Naive thymus-derived CD4-positive, alpha-beta T cell (primary cell): ENCODE measurements at regions of chr16 and their contacts with region 1.

Region 1: GRCh38 chr16:71808593-71809459 is at the start of gene AP1G1:
- DNase-seq: peak; percentile 78 to 98 (median 94)
- ATAC-seq: peak; percentile 95
- H3K4me3 ChIP-seq: peak within 1 kb of the TSS; percentile 99
- H3K4me3 Mint-ChIP-seq: peak within 1 kb of the TSS; percentile 86 to 99 (median 97)
- H3K27ac ChIP-seq: peak within 1 kb of the TSS; percentile 99
- H3K27ac Mint-ChIP-seq: peak within 1 kb of the TSS; percentile 98 to 100 (median 100)
- H3K4me1 ChIP-seq: peaks cover 22 to 24% of the 10 kb centered on the region in 2 donors
- H3K4me1 Mint-ChIP-seq: peaks cover 7 to 68% (median 37%) of the 10 kb centered on the region in 7 donors
- H3K27me3 ChIP-seq: no peaks in the 10 kb centered on the region
- H3K27me3 Mint-ChIP-seq: peaks cover 0 to 2% (median 0%) of the 10 kb centered on the region in 5 donors
- total RNA-seq, gene AP1G1: 95.3 to 147 (median 100.0) TPM

Region 2: GRCh38 chr16:71461686-71462648 is 346.9 kb before region 1 on chr16 and contains the start of gene ZNF23:
- CTCF ChIA-PET with region 1: no interaction called
- POLR2A ChIA-PET with region 1: no interaction called
- intact Hi-C with region 1: loop called in 1 of 2 experiments (anchors 10 kb)
- DNase-seq: peak; percentile 53 to 84 (median 72)
- ATAC-seq: peak; percentile 99
- H3K4me3 ChIP-seq: peak within 1 kb of the TSS; percentile 92
- H3K4me3 Mint-ChIP-seq: peak within 1 kb of the TSS; percentile 88 to 97 (median 94)
- H3K27ac ChIP-seq: peak within 1 kb of the TSS; percentile 87
- H3K27ac Mint-ChIP-seq: peak within 1 kb of the TSS; percentile 85 to 98 (median 92)
- H3K4me1 ChIP-seq: peaks cover 4 to 6% of the 10 kb centered on the region in 2 donors
- H3K4me1 Mint-ChIP-seq: peaks cover 13 to 39% (median 27%) of the 10 kb centered on the region in 7 donors
- H3K27me3 ChIP-seq: no peaks in the 10 kb centered on the region
- H3K27me3 Mint-ChIP-seq: no peaks in the 10 kb centered on the region
- total RNA-seq, gene ZNF23: 6.5 to 16.0 (median 8.8) TPM

Region 3: GRCh38 chr16:71474864-71475263 is 334.0 kb before region 1 on chr16:
- CTCF ChIA-PET with region 1: no interaction called
- POLR2A ChIA-PET with region 1: no interaction called
- intact Hi-C with region 1: no loop called
- DNase-seq: no peak
- ATAC-seq: no peak
- H3K4me3 ChIP-seq: no peak overlapping the region
- H3K4me3 Mint-ChIP-seq: no peak overlapping the region
- H3K27ac ChIP-seq: no peak overlapping the region
- H3K27ac Mint-ChIP-seq: no peak overlapping the region
- H3K4me1 ChIP-seq: no peaks in the 10 kb centered on the region
- H3K4me1 Mint-ChIP-seq: peaks cover 0 to 5% (median 0%) of the 10 kb centered on the region in 7 donors
- H3K27me3 ChIP-seq: no peaks in the 10 kb centered on the region
- H3K27me3 Mint-ChIP-seq: no peaks in the 10 kb centered on the region

Region 4: GRCh38 chr16:71723537-71724319 is 85.1 kb before region 1 on chr16:
- CTCF ChIA-PET with region 1: no interaction called
- POLR2A ChIA-PET with region 1: interaction called, 5 read pairs
- intact Hi-C with region 1: loop called (anchors 1 kb)
- DNase-seq: peak; percentile 81 to 93 (median 88)
- ATAC-seq: peak; percentile 93
- H3K4me3 ChIP-seq: peak overlapping the region; percentile 79
- H3K4me3 Mint-ChIP-seq: peak overlapping the region; percentile 80 to 97 (median 86)
- H3K27ac ChIP-seq: peak overlapping the region; percentile 79
- H3K27ac Mint-ChIP-seq: peak overlapping the region in 8 of 9 donors; percentile 30 to 92 (median 78)
- H3K4me1 ChIP-seq: peaks cover 9% of the 10 kb centered on the region in 2 donors
- H3K4me1 Mint-ChIP-seq: peaks cover 7 to 20% (median 19%) of the 10 kb centered on the region in 7 donors
- H3K27me3 ChIP-seq: no peaks in the 10 kb centered on the region
- H3K27me3 Mint-ChIP-seq: peaks cover 0 to 17% (median 0%) of the 10 kb centered on the region in 5 donors

Region 5: DNA sequence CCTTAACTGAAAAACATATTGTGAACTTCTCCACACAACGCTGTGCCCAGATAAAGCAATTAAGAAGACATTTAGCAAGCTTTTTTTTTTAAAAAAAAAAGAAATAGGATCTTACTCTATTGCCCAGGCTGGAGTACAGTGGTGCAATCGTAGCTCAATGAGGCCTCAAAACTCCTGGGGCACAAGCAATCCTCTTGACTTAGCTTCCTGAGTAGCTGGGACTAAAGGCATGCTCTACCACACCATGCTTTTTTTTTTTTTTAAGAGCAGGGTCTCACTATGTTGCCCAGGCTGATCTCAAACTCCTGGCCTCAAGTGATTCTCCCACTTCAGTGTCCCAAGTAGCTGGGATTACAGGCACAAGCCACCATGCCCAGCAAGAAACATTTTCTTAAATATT is 20.2 kb before region 1 on chr16:
- CTCF ChIA-PET with region 1: no interaction called
- POLR2A ChIA-PET with region 1: interaction called, 10 read pairs
- intact Hi-C with region 1: no loop called
- DNase-seq: no peak
- ATAC-seq: no peak
- H3K4me3 ChIP-seq: no peak overlapping the region
- H3K4me3 Mint-ChIP-seq: no peak overlapping the region
- H3K27ac ChIP-seq: no peak overlapping the region
- H3K27ac Mint-ChIP-seq: peak overlapping the region in 3 of 9 donors; percentile 9 to 57 (median 21)
- H3K4me1 ChIP-seq: peaks cover 7 to 20% of the 10 kb centered on the region in 2 donors
- H3K4me1 Mint-ChIP-seq: peaks cover 32 to 71% (median 60%) of the 10 kb centered on the region in 7 donors
- H3K27me3 ChIP-seq: no peaks in the 10 kb centered on the region
- H3K27me3 Mint-ChIP-seq: no peaks in the 10 kb centered on the region

Region 6: DNA sequence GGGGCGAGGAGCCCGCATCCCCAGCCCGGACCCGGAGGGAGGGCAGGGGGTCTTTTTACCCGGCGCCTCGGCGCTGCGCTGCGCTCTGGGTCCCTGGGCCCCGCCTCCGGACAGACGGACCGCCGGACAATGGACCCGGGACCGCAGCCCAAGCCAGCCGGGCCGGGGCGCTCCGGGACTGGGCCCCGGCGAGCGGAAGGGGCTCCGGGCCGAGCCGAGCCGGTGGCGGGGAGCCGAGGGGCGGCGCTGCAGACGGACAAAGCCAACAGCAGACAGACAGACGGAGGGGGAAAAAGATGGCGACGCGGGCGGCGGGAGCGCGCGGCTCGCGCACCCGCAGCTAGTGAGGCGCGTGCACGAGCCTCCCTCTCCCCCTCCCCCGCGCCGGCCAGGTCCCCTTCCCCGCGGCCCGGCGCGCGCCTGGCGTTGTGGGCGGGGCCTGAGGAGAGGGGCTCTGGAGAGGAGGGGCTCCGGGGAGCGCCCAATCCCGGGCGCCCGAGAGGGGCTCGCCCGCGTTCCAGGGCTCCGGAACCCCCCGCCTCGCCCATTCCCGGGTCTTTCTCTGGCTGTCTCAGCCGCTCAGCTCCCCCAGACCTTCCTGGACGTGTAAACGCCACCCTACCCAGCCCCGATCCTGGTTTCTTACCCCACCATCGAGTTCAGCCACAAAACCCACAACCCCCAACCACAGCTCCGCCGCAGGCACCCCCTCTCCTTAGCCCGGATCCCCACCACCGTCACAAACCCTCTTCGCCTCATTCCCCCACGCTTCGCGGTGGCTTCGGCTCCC is 75.2 kb after region 1 on chr16 and contains the start of gene ZNF821:
- CTCF ChIA-PET with region 1: interaction called, 21 read pairs
- POLR2A ChIA-PET with region 1: interaction called, 144 read pairs
- intact Hi-C with region 1: loop called (anchors 1 kb)
- DNase-seq: peak; percentile 62 to 81 (median 68)
- ATAC-seq: peak; percentile 68
- H3K4me3 ChIP-seq: peak within 1 kb of the TSS; percentile 67
- H3K4me3 Mint-ChIP-seq: peak within 1 kb of the TSS; percentile 84 to 99 (median 96)
- H3K27ac ChIP-seq: peak within 1 kb of the TSS; percentile 84
- H3K27ac Mint-ChIP-seq: peak within 1 kb of the TSS; percentile 88 to 97 (median 95)
- H3K4me1 ChIP-seq: peaks cover 30 to 33% of the 10 kb centered on the region in 2 donors
- H3K4me1 Mint-ChIP-seq: peaks cover 44 to 56% (median 50%) of the 10 kb centered on the region in 7 donors
- H3K27me3 ChIP-seq: no peaks in the 10 kb centered on the region
- H3K27me3 Mint-ChIP-seq: peaks cover 0 to 20% (median 0%) of the 10 kb centered on the region in 5 donors
- total RNA-seq, gene ZNF821: 2.6 to 13.3 (median 7.0) TPM

Region 7: DNA sequence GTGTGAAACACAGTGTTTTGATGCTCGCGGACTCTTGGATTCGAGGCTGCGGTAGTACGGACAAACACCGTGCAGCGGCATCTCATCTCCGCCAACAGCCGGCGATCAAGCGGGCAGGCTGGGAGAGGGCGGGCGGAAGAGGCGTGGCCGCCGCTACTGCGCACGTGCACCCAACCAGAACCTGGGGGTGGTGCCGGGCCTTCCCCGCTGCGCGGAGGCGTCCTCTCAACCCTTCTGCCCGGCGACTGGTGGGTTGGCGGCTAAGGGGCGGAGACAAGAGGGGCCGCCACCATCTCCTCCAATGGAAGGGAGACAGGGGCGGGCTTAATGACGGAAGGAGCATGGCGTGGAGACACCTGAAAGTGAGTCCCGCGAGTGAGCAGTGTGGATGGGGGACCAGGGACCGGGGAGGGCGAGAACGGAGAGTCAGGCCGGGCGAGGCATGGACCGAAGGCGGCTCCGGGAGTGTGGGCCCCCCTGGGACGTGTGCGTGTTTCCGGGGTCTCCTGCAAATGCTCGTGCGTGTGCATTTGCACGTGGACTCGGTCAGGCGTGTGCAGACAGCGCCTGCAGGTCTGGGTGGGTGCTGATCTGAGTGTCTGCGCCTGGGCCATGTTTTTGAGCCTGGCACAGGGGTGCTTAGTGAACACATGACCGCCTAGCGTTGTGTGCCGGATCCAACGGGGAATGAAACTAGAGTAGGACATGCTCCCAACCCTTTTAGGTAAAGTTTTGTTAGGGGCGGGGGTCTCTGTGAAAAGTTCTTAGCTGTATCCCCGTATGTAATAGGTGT is 199.8 kb after region 1 on chr16 and contains the start of gene DHODH:
- CTCF ChIA-PET with region 1: no interaction called
- POLR2A ChIA-PET with region 1: interaction called, 3 read pairs
- intact Hi-C with region 1: loop called (anchors 1 kb)
- DNase-seq: peak; percentile 92 to 99 (median 97)
- ATAC-seq: peak; percentile 100
- H3K4me3 ChIP-seq: peak within 1 kb of the TSS; percentile 100
- H3K4me3 Mint-ChIP-seq: peak within 1 kb of the TSS; percentile 92 to 100 (median 98)
- H3K27ac ChIP-seq: peak within 1 kb of the TSS; percentile 62
- H3K27ac Mint-ChIP-seq: peak within 1 kb of the TSS; percentile 75 to 96 (median 89)
- H3K4me1 ChIP-seq: no peaks in the 10 kb centered on the region
- H3K4me1 Mint-ChIP-seq: peaks cover 9 to 22% (median 16%) of the 10 kb centered on the region in 7 donors
- H3K27me3 ChIP-seq: no peaks in the 10 kb centered on the region
- H3K27me3 Mint-ChIP-seq: peaks cover 0 to 3% (median 0%) of the 10 kb centered on the region in 5 donors
- total RNA-seq, gene DHODH: 4.9 to 15.6 (median 14.0) TPM